Heart left ventricle (tissue), 16 donors: ENCODE measurements at regions of chr22 and their contacts with region 1.

Region 1: GRCh38 chr22:35454416-35455054 is 54.6 kb downstream of the MCM5 start:
- DNase-seq: peak in 3 of 5 donors; percentile 29 to 41 (median 39)
- ATAC-seq: peak; percentile 45 to 61 (median 50)
- H3K4me3 ChIP-seq: no peak overlapping the region
- H3K27ac ChIP-seq: no peak overlapping the region
- H3K4me1 ChIP-seq: no peaks in the 10 kb centered on the region
- H3K27me3 ChIP-seq: peaks cover 0 to 3% (median 0%) of the 10 kb centered on the region in 9 donors
- CTCF ChIP-seq: peak in 10 of 12 donors; percentile 16 to 51 (median 30)
- POLR2A ChIP-seq: no peak

Region 2: DNA sequence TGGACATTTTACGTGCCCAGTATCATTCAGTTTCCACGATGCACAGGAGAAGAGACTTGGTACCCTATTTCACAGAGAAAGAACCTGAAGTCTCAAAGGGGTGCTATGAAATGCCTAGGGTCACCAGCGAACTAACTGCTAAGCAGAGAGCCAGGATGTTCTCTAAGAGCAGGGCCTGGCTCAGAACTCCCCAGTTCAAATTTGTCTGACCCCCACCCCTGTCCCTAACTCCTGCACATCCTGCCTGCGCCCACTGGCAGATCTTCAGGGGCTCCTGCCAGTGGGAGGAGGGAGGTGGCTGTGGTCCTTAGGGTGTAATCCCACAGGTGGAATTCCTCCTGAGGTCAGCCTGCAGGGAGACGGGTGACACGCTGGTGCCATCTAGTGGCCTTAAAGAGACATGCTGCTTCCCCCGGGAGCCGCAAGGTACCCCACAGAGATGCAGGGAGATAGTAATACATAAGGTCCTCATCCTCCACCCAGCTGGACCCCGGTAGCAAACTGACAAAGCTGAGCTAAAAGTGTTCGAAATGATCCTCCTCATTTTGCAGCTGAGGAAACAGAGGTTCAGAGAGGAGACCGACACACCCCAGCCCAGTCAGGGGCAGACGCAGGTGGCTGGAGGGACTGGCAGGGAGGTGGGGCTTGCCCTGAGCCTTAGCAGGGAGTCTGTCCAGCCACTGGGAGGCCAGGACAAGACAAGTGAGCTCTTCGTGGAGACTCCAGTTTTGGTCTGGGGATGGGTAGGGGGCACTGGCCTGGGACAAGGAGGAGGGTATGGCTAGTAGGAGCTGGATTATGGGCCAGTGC is 128.5 kb after region 1 on chr22:
- intact Hi-C with region 1: loop called in 1 of 10 experiments (anchors 5 kb)
- DNase-seq: peak in 4 of 5 donors; percentile 47 to 68 (median 63)
- ATAC-seq: peak in 1 of 4 donors; percentile 16
- H3K4me3 ChIP-seq: no peak overlapping the region
- H3K27ac ChIP-seq: peak overlapping the region in 7 of 12 donors; percentile 3 to 64 (median 29)
- H3K4me1 ChIP-seq: peaks cover 0 to 29% (median 11%) of the 10 kb centered on the region in 12 donors
- H3K27me3 ChIP-seq: no peaks in the 10 kb centered on the region
- CTCF ChIP-seq: peak; percentile 89 to 97 (median 93)
- POLR2A ChIP-seq: no peak